ENCODE measurements at regions of chr6 and their contacts with region 1.

Region 1: DNA sequence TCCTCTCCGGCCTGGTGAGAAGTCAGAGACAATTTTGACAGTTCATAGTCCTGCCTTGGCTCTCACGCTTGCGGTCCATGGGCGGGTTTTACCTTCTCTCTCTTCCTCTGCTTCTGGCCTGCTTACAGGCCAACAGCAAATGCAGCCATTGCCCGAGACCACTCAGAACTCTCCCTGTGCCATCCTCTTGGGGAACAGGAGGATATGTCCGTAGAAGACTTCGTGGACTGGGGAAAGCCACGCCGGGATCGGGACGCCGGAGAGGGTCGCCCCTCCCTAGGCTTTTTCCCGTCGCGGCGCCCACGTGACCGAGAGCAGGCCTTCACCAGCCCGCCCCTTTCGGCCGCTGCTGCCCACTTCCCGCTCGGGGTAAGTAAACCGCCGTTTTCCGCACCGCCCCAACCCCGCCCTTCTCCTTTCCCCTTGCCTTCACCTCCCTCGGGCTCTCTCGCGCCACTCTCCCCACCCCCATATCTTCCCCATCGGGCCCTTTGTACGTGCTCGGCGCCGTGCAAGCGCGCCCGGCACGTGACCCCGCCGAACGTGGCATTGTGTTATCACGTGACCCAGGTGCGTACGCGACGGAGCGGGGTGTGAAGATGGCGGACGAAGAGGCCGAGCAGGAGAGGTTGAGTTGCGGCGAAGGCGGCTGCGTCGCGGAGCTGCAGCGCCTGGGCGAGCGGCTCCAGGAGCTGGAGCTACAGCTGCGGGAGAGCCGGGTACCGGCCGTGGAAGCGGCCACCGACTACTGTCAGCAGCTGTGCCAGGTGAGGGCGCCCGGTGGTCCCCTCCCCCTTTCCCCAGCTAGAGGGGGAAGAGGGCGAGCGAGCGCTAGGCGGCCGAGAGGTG is at the start of gene ZNF292:
- DNase-seq: peak; percentile 99
- ATAC-seq: peak; percentile 87
- H3K4me3 Mint-ChIP-seq: peak within 1 kb of the TSS; percentile 85
- H3K27ac Mint-ChIP-seq: peak within 1 kb of the TSS; percentile 100
- H3K4me1 Mint-ChIP-seq: peaks cover 32% of the 10 kb centered on the region
- H3K27me3 Mint-ChIP-seq: no peaks in the 10 kb centered on the region
- CTCF ChIP-seq: no peak
- total RNA-seq, gene ZNF292: 76.4 to 78.3 TPM

Region 2: DNA sequence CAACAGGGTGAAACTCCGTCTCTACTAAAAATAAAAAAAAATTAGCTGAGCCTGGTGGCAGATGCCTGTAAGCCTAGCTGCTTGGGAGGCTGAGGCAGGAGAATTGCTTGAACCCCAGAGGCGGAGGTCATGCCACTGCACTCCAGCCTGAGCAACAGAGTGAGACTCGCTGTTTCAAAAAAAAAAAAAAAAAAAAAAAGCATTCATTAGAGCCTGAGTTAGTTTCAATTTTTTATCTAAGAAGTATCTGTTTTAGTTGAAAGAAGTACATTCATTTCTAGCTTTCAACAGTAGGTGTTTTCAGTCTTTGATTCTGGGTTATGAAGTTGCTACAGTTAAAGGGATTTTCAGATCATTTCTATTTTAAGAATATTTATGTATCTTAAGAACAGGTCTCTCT is 42.3 kb after region 1 on chr6:
- CTCF ChIA-PET with region 1: interaction called, 4 read pairs
- POLR2A ChIA-PET with region 1: interaction called, 4 read pairs
- intact Hi-C with region 1: loop called (anchors 5 kb)
- DNase-seq: peak; percentile 24
- ATAC-seq: peak; percentile 62
- H3K4me3 Mint-ChIP-seq: no peak overlapping the region
- H3K27ac Mint-ChIP-seq: peak overlapping the region; percentile 55
- H3K4me1 Mint-ChIP-seq: peaks cover 78% of the 10 kb centered on the region
- H3K27me3 Mint-ChIP-seq: no peaks in the 10 kb centered on the region
- CTCF ChIP-seq: no peak

Region 3: DNA sequence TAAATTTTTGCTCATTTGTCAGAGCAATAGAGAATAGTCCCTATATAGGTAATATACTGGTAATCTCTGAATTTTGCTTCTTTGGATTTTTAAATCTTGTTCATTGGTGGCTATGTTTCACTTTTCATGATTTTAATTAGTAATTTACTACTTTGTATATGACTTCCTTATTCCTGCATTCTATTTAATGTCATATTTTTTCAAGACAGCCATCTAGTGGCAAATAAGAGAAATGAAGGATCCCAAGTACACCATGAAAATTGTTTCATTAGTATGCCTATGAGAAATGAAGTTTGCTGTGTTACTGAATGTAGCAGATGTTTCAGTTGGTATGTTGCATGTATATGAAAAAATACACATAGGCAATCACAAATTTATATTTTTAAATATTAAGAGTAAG is 82.6 kb after region 1 on chr6:
- CTCF ChIA-PET with region 1: interaction called, 3 read pairs
- POLR2A ChIA-PET with region 1: no interaction called
- intact Hi-C with region 1: loop called (anchors 5 kb)
- DNase-seq: no peak
- ATAC-seq: peak; percentile 61
- H3K4me3 Mint-ChIP-seq: no peak overlapping the region
- H3K27ac Mint-ChIP-seq: no peak overlapping the region
- H3K4me1 Mint-ChIP-seq: peaks cover 8% of the 10 kb centered on the region
- H3K27me3 Mint-ChIP-seq: no peaks in the 10 kb centered on the region
- CTCF ChIP-seq: peak; percentile 71

Region 4: DNA sequence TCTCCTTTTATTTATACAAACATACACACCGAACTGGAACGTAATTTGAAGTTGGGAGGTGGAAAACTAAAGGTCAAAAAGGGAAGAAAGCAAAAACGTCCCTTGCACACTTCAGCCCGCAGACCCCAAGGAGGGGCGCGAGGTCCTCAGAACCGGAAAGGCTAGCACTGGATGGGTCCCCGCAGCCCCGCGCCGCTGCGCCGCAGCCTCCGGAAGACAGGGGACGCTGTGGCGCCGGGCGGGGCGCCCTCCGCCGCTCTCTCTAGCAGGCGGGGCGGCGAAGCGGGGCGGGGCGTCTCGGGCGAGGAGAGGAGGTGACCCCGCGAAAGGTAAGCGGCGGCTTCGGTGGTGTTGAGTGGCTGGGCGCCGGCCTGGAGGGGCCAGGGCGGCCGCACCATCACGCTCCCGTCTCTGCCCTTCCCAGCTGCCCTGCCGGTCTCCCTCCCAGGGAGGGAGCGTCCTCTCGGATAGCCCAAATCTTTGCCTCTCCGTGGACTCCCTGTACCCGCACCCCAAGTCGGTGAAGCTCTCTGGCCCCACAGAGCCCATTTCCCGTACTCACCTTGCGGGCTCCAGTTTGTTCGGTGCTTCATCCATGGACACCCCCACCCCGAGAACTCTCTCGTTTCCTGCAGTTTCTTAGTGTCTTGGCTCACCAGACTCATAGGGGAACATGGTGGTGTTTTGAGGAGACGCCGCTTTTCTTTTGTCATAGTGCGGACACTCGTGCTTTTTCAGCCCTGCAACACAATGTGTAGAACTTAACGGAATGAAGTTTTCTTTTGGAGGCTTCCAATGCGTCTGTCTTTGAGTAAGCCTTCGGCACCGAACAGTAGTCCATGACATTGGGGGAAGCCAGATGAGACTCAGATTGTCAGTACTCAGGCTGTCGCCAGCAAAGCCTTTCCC is 167.3 kb after region 1 on chr6 and contains the start of gene SMIM8:
- CTCF ChIA-PET with region 1: interaction called, 3 read pairs
- POLR2A ChIA-PET with region 1: no interaction called
- intact Hi-C with region 1: loop called (anchors 10 kb)
- DNase-seq: peak; percentile 91
- ATAC-seq: peak; percentile 100
- H3K4me3 Mint-ChIP-seq: peak within 1 kb of the TSS; percentile 96
- H3K27ac Mint-ChIP-seq: peak within 1 kb of the TSS; percentile 88
- H3K4me1 Mint-ChIP-seq: peaks cover 14% of the 10 kb centered on the region
- H3K27me3 Mint-ChIP-seq: no peaks in the 10 kb centered on the region
- CTCF ChIP-seq: peak; percentile 95
- total RNA-seq, gene SMIM8: 10.7 to 11.9 TPM

Region 5: GRCh38 chr6:87472525-87473418 is 317.6 kb after region 1 on chr6 and contains the start of gene SLC35A1:
- CTCF ChIA-PET with region 1: no interaction called
- POLR2A ChIA-PET with region 1: interaction called, 3 read pairs
- intact Hi-C with region 1: loop called (anchors 10 kb)
- DNase-seq: peak; percentile 86
- ATAC-seq: peak; percentile 90
- H3K4me3 Mint-ChIP-seq: peak within 1 kb of the TSS; percentile 82
- H3K27ac Mint-ChIP-seq: peak within 1 kb of the TSS; percentile 95
- H3K4me1 Mint-ChIP-seq: peaks cover 18% of the 10 kb centered on the region
- H3K27me3 Mint-ChIP-seq: peaks cover 5% of the 10 kb centered on the region
- CTCF ChIP-seq: peak; percentile 11
- total RNA-seq, gene SLC35A1: 7.7 to 7.9 TPM

Measured in activated CD8-positive, alpha-beta T cell treated with anti-CD3 and anti-CD28 coated beads for 36 hours (primary cell).